CD4-positive, alpha-beta T cell (primary cell): ENCODE measurements at regions of chr3 and their contacts with region 1.

Region 1: DNA sequence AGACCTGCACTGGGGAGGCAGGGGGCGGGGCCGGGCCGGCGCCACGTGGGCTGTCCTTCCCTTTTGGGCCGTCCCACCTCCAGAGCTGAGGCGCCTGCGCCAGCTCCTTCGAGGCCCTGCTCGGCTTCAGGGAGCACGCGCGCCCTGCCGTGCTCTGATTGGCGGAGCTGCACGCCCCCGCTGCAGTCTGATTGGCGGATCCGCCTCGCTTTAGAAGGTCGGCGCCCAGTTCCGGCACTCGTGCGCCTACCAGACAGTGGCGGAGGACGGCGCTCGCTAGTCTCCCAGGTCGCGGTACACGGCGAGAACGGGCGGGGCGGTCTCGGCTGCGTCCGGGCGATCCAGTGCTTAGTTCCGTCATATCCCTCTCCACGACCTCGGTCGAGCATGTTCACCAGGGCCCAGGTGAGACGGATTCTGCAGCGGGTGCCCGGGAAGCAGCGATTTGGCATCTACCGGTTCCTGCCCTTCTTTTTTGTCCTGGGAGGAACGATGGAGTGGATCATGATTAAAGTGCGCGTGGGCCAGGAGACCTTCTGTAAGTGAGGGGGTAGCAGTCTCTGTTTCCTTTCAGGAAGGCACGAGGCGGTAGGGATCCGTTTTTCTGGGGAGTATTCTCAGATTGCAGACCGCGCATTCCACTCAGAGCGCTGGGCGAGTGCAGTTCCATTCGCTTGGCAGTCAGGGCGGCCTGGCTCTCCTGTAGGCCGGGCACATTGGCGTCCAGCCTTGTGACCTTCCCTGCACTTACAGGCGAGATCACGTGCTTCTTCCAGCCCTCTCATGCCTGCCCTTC is at the start of gene UQCC5:
- DNase-seq: peak; percentile 93 to 99 (median 96)
- ATAC-seq: peak; percentile 89
- H3K4me3 ChIP-seq: peak within 1 kb of the TSS; percentile 92
- H3K4me3 Mint-ChIP-seq: peak within 1 kb of the TSS; percentile 99
- H3K27ac ChIP-seq: peak within 1 kb of the TSS; percentile 71 to 83
- H3K27ac Mint-ChIP-seq: peak within 1 kb of the TSS; percentile 95
- H3K4me1 ChIP-seq: peaks cover 64% of the 10 kb centered on the region
- H3K4me1 Mint-ChIP-seq: peaks cover 60% of the 10 kb centered on the region
- H3K27me3 ChIP-seq: peaks cover 0 to 3% of the 10 kb centered on the region in 2 experiments
- H3K27me3 Mint-ChIP-seq: no peaks in the 10 kb centered on the region
- CTCF ChIP-seq: peak; percentile 22
- total RNA-seq, gene UQCC5: 2.8 to 8.3 TPM

Region 2: DNA sequence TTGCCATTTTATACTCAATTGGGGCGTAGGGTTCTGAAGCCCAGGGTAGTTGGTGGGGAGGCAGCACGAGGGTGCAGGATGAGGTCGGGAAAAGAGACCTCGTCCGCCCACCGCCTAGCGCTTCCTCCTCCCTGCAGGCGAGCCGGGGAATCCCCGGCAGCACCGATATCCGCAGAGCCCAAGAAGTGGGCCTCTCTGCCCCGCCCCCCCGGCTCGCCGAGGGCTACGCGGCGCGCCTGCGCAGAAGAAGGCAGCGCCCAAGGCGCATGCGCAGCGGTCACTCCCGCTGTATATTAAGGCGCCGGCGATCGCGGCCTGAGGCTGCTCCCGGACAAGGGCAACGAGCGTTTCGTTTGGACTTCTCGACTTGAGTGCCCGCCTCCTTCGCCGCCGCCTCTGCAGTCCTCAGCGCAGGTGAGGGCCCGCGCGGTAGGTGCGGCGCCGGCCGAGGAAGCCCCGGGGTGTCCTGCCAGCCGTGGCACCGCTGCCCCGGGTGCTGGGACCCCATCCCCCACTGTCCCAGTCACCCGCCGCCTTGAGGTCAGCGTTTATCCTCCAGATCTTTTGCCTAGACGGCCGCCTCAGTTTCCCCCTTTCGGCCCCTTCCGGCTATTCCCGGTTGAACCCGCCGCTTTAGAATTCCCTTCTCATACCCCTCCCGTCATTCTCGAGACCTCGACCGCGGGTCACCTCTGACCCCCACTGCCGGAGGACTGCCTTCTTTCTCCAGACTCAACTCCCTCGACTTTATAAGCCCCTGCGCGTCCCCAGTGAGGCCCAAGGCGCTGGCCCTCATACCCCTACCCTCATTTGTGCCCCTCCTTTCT is 338.5 kb before region 1 on chr3 and contains the start of gene ALAS1:
- CTCF ChIA-PET with region 1: no interaction called
- POLR2A ChIA-PET with region 1: no interaction called
- intact Hi-C with region 1: loop called in 1 of 2 experiments (anchors 10 kb)
- DNase-seq: peak; percentile 87 to 97 (median 94)
- ATAC-seq: peak; percentile 98
- H3K4me3 ChIP-seq: peak within 1 kb of the TSS; percentile 90
- H3K4me3 Mint-ChIP-seq: peak within 1 kb of the TSS; percentile 98
- H3K27ac ChIP-seq: peak within 1 kb of the TSS; percentile 70 to 73
- H3K27ac Mint-ChIP-seq: peak within 1 kb of the TSS; percentile 92
- H3K4me1 ChIP-seq: peaks cover 50% of the 10 kb centered on the region
- H3K4me1 Mint-ChIP-seq: peaks cover 51% of the 10 kb centered on the region
- H3K27me3 ChIP-seq: no peaks in the 10 kb centered on the region
- H3K27me3 Mint-ChIP-seq: no peaks in the 10 kb centered on the region
- CTCF ChIP-seq: no peak
- total RNA-seq, gene ALAS1: 6.0 to 7.0 TPM

Region 3: DNA sequence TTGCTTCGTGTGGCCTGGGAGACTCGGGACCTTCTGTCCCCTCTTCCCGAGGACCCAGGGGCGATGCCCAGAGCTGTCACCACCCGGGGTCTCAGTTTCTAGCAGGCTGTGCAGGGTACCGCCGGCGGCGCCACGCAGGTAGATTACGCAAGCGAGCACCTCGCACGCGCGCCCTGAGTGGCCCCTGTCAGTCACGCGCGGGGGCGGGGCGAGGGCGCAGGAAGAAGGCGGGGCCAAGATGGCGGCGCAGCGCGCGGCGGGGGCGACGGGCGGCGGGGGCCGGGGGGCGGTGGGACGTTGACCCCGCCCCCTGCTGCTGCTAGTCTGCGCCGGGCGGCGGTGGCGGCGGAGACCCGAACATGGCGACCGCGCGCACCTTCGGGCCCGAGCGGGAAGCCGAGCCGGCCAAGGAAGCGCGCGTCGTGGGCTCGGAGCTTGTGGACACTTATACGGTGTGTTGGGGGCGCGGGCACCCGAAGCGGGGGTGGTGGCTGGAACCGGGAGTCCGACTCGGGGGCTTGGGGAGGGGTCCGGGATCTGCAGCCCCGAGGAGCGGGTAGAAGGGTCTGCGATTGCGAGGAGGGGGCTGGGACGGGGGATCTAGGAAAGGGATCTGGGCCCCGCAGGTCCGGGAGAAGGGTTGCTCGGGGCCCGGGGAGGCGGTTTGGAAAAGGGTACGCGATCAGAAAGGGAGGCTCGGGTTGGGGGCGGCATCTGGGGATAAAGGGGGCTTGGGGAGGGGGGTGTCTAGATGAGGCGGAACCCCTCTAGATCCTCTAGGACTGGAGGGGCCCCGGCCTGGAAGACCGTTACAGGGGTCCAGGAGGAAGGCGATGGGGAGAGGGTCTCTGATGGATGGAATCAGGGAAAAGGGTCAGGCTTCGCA is 81.0 kb before region 1 on chr3 and contains the start of gene NISCH:
- CTCF ChIA-PET with region 1: no interaction called
- POLR2A ChIA-PET with region 1: interaction called, 4 read pairs
- intact Hi-C with region 1: loop called in 1 of 2 experiments (anchors 2 kb)
- DNase-seq: peak; percentile 91 to 99 (median 97)
- ATAC-seq: peak; percentile 95
- H3K4me3 ChIP-seq: peak within 1 kb of the TSS; percentile 97
- H3K4me3 Mint-ChIP-seq: peak within 1 kb of the TSS; percentile 96
- H3K27ac ChIP-seq: peak within 1 kb of the TSS; percentile 81 to 85
- H3K27ac Mint-ChIP-seq: peak within 1 kb of the TSS; percentile 100
- H3K4me1 ChIP-seq: peaks cover 44% of the 10 kb centered on the region
- H3K4me1 Mint-ChIP-seq: peaks cover 43% of the 10 kb centered on the region
- H3K27me3 ChIP-seq: no peaks in the 10 kb centered on the region
- H3K27me3 Mint-ChIP-seq: no peaks in the 10 kb centered on the region
- CTCF ChIP-seq: no peak
- total RNA-seq, gene NISCH: 160 to 163 TPM

Region 4: GRCh38 chr3:52897130-52898122 is 360.9 kb after region 1 on chr3 and contains the start of gene STIMATE:
- CTCF ChIA-PET with region 1: no interaction called
- POLR2A ChIA-PET with region 1: no interaction called
- intact Hi-C with region 1: loop called in 1 of 2 experiments (anchors 10 kb)
- DNase-seq: peak; percentile 64 to 96 (median 85)
- ATAC-seq: peak; percentile 88
- H3K4me3 ChIP-seq: peak within 1 kb of the TSS; percentile 69
- H3K4me3 Mint-ChIP-seq: peak within 1 kb of the TSS; percentile 98
- H3K27ac ChIP-seq: peak within 1 kb of the TSS; percentile 33 to 45
- H3K27ac Mint-ChIP-seq: peak within 1 kb of the TSS; percentile 82
- H3K4me1 ChIP-seq: peaks cover 49% of the 10 kb centered on the region
- H3K4me1 Mint-ChIP-seq: peaks cover 52% of the 10 kb centered on the region
- H3K27me3 ChIP-seq: no peaks in the 10 kb centered on the region
- H3K27me3 Mint-ChIP-seq: no peaks in the 10 kb centered on the region
- CTCF ChIP-seq: no peak
- total RNA-seq, gene STIMATE: 39.8 to 42.6 TPM